Panc1 (cell line): ENCODE measurements at regions of chr13 and their contacts with region 1.

Region 1: GRCh38 chr13:97855570-97856303 is 97.7 kb upstream of the IPO5 start:
- DNase-seq: peak; percentile 18
- ATAC-seq: peak; percentile 95
- H3K4me3 ChIP-seq: no peak overlapping the region
- H3K27ac ChIP-seq: no peak overlapping the region
- H3K4me1 ChIP-seq: no peaks in the 10 kb centered on the region
- H3K27me3 ChIP-seq: no peaks in the 10 kb centered on the region
- CTCF ChIP-seq: peak; percentile 83

Region 2: DNA sequence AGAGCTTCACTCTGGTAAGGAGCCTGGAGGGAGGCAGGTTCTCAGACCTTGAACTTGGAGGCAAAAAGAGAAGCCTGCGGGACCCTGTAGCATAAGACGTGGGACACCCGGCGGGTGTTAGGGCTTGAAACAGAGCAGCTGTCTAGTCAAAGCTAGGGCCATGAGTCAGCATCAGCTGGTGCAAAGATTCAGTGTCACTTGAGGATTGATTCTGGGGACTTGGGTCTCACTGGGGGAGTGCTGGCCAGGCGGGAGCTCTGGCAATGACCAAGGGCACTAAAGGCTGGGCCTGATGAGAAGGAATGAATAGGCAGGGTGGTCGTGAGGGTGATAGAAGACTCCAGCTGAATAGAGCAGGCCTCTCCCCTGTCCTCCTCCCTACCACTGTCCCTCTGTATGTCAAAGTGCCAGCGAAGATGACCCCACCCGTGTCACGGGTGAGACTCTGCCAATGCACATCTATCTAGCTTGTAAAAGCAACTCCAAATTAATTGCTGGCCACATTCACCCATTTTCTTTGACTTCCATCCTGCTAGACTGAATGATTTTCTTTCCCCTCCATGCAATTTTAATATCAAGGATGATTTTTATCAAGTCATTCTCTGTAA is 536.5 kb before region 1 on chr13:
- CTCF ChIA-PET with region 1: no interaction called
- POLR2A ChIA-PET with region 1: no interaction called
- in situ Hi-C with region 1: no loop called
- intact Hi-C with region 1: no loop called
- DNase-seq: no peak
- ATAC-seq: peak; percentile 42
- H3K4me3 ChIP-seq: no peak overlapping the region
- H3K27ac ChIP-seq: peak overlapping the region; percentile 100
- H3K4me1 ChIP-seq: peaks cover 83% of the 10 kb centered on the region
- H3K27me3 ChIP-seq: no peaks in the 10 kb centered on the region
- CTCF ChIP-seq: no peak

Region 3: GRCh38 chr13:98041081-98041820 is 185.5 kb after region 1 on chr13:
- CTCF ChIA-PET with region 1: interaction called, 11 read pairs
- POLR2A ChIA-PET with region 1: no interaction called
- in situ Hi-C with region 1: no loop called
- intact Hi-C with region 1: no loop called
- DNase-seq: no peak
- ATAC-seq: no peak
- H3K4me3 ChIP-seq: no peak overlapping the region
- H3K27ac ChIP-seq: no peak overlapping the region
- H3K4me1 ChIP-seq: no peaks in the 10 kb centered on the region
- H3K27me3 ChIP-seq: no peaks in the 10 kb centered on the region
- CTCF ChIP-seq: no peak